ENCODE measurements at regions of chr18 and their contacts with region 1.

Region 1: DNA sequence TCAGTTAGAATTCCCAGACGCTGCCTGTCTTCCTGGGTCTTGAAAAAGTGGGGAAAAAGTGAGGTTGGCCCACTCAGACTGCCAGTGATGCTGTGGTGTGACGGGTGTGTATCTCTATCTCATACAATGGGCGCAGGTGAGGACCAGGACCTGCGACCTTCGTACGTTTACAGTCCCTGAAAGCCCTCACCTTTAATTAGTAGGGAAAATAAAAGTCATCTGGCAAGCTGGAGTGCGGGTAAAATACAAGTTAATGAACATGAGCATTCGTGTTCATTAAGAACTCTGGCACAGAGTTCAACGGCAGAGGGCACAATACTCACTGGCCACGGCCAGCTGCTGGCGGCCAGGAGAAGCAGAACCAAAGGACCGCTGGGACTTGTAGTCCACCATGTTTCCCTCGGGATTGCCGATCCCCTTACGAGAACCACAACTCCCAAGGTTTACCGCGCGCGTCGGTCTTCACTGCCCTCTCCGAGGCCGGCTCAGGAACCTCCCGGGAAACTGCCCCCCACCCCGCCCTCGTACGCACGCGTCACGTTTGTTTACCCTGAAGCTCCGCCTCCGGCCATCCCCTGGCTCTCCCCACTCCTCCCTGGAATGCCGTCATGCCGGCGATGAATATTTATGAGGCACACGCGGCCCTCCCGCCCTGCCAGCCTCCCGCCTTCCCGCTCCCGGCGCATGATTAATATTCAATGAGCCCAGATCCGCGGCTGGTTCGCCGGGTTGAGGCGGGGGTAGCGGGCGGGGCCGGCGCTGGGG is 488 bp upstream of the PHLPP1 start:
- DNase-seq: peak; percentile 100
- H3K4me3 ChIP-seq: peak overlapping the region; percentile 74 to 86 (median 79)
- H3K27ac ChIP-seq: peak overlapping the region; percentile 97 to 99 (median 98)
- H3K4me1 ChIP-seq: peaks cover 6 to 41% (median 20%) of the 10 kb centered on the region in 4 donors
- H3K27me3 ChIP-seq: no peaks in the 10 kb centered on the region
- CTCF ChIP-seq: peak; percentile 64 to 86 (median 73)
- EP300 ChIP-seq: peak; percentile 14
- POLR2A ChIP-seq: peak; percentile 75

Region 2: GRCh38 chr18:62186774-62187542 is 527.9 kb before region 1 on chr18 and contains the starts of genes PIGN and RELCH:
- in situ Hi-C with region 1: loop called in 1 of 4 experiments (anchors 25 kb)
- intact Hi-C with region 1: no loop called
- DNase-seq: peak; percentile 96
- H3K4me3 ChIP-seq: peak within 1 kb of the TSS; percentile 83 to 91 (median 86)
- H3K27ac ChIP-seq: peak within 1 kb of the TSS; percentile 86 to 94 (median 91)
- H3K4me1 ChIP-seq: peaks cover 8 to 49% (median 25%) of the 10 kb centered on the region in 4 donors
- H3K27me3 ChIP-seq: no peaks in the 10 kb centered on the region
- CTCF ChIP-seq: no peak
- EP300 ChIP-seq: no peak
- POLR2A ChIP-seq: peak; percentile 95
- total RNA-seq, gene PIGN: 15.3 to 105 (median 42.3) TPM
- total RNA-seq, gene RELCH: 37.0 to 117 (median 68.7) TPM

Region 3: GRCh38 chr18:62584241-62585120 is 130.4 kb before region 1 on chr18:
- in situ Hi-C with region 1: no loop called
- intact Hi-C with region 1: loop called (anchors 10 kb)
- DNase-seq: peak; percentile 88
- H3K4me3 ChIP-seq: no peak overlapping the region
- H3K27ac ChIP-seq: peak overlapping the region; percentile 3 to 45 (median 14)
- H3K4me1 ChIP-seq: peaks cover 4 to 22% (median 5%) of the 10 kb centered on the region in 4 donors
- H3K27me3 ChIP-seq: no peaks in the 10 kb centered on the region
- CTCF ChIP-seq: peak; percentile 97 to 100 (median 98)
- EP300 ChIP-seq: no peak
- POLR2A ChIP-seq: no peak

Region 4: GRCh38 chr18:62957885-62958472 is 243.1 kb after region 1 on chr18:
- in situ Hi-C with region 1: loop called in 3 of 4 experiments (anchors 10 to 25 kb)
- intact Hi-C with region 1: no loop called
- DNase-seq: peak; percentile 44
- H3K4me3 ChIP-seq: no peak overlapping the region
- H3K27ac ChIP-seq: no peak overlapping the region
- H3K4me1 ChIP-seq: no peaks in the 10 kb centered on the region
- H3K27me3 ChIP-seq: no peaks in the 10 kb centered on the region
- CTCF ChIP-seq: peak; percentile 35 to 68 (median 49)
- EP300 ChIP-seq: no peak
- POLR2A ChIP-seq: no peak

Region 5: DNA sequence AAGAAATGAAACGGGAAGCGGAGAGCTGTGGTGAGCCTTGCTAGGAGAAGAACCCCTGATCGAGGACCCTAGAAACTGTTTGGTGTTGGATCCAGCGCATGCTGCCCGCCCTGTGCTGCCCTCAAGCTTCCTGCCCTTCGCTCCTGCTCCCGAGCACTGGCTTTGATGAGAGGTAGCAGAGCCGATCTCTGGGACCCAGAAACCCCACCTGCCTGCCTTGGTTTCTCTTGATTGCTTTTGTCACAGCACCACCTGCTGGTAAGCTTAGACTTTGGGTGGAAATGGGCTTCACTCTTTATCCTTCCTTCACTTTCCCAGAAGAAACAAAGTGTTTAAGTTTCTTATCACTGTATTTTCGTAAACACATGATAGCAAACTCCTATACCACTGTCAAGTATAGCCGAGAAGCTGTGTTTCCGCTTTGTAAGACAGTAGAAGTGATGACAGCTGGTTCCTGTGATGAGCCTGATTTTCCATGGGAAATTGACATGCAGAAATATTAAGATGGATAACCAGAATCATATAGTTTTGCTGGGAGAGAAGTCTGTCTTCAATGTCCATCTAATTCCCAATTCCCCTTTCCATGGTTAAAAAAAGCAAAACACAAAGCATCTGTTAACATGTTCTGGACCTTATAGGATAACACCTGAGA is 267.9 kb after region 1 on chr18:
- in situ Hi-C with region 1: loop called in 1 of 4 experiments (anchors 25 kb)
- intact Hi-C with region 1: loop called (anchors 5 kb)
- DNase-seq: peak; percentile 44
- H3K4me3 ChIP-seq: peak overlapping the region in 2 of 4 donors; percentile 19 to 24
- H3K27ac ChIP-seq: no peak overlapping the region
- H3K4me1 ChIP-seq: peaks cover 0 to 4% (median 3%) of the 10 kb centered on the region in 4 donors
- H3K27me3 ChIP-seq: no peaks in the 10 kb centered on the region
- CTCF ChIP-seq: peak; percentile 71 to 79 (median 73)
- EP300 ChIP-seq: no peak
- POLR2A ChIP-seq: no peak

Region 6: GRCh38 chr18:63273222-63273927 is 558.5 kb after region 1 on chr18:
- in situ Hi-C with region 1: no loop called
- intact Hi-C with region 1: no loop called
- DNase-seq: no peak
- H3K4me3 ChIP-seq: no peak overlapping the region
- H3K27ac ChIP-seq: no peak overlapping the region
- H3K4me1 ChIP-seq: peaks cover 0 to 22% (median 1%) of the 10 kb centered on the region in 4 donors
- H3K27me3 ChIP-seq: no peaks in the 10 kb centered on the region
- CTCF ChIP-seq: no peak
- EP300 ChIP-seq: no peak
- POLR2A ChIP-seq: no peak

Region 7: DNA sequence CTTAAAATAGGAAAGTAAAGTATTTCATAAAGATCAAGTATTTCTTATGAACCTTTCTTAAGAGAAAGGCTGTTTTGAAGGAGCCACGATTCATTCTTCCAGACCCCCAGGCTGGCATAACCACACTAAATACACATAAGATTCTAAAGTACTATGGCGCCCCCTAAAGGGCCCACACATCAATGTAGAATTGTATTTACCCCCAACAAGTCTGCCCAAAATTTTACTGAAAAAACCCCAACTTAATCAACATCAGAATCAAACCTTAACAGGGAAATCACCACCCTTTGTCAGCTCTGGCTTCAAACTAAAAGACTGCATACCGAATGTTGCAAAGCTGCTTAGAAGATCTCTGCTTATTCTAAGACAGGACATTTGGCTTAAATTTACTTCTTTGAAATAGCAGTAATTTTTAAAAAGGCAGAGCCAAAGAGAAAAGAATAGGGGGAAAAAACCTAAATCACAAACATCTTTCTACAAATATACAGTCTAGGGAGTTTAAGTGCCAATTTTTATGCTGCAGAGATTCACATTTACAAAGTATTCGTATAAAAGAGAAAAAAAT is 625.1 kb after region 1 on chr18:
- in situ Hi-C with region 1: loop called in 1 of 4 experiments (anchors 25 kb)
- intact Hi-C with region 1: no loop called
- DNase-seq: no peak
- H3K4me3 ChIP-seq: no peak overlapping the region
- H3K27ac ChIP-seq: no peak overlapping the region
- H3K4me1 ChIP-seq: peaks cover 0 to 7% (median 6%) of the 10 kb centered on the region in 4 donors
- H3K27me3 ChIP-seq: no peaks in the 10 kb centered on the region
- CTCF ChIP-seq: peak in 4 of 5 experiments; percentile 13 to 45 (median 40)
- EP300 ChIP-seq: no peak
- POLR2A ChIP-seq: no peak

Region 8: DNA sequence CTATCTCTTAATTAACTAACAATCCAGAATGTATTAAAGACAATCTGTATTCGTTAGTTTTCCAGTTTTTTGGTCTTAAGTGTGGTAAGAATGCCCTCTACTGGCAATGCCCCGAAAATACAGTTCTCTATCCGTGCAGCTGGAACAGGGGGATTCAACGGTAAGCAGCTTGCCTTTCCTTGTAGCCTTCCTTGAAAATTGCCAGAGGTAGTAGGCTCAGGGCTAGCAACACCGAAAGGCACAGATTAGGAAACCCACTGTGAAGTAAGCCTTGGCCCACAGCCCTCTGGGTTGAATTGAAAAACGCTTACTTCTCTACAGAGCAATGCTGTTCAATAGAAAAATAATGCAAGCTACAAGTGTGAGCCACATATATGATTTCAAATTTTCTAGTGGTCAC is 724.5 kb after region 1 on chr18:
- in situ Hi-C with region 1: loop called in 1 of 4 experiments (anchors 25 kb)
- intact Hi-C with region 1: no loop called
- DNase-seq: peak; percentile 52
- H3K4me3 ChIP-seq: no peak overlapping the region
- H3K27ac ChIP-seq: no peak overlapping the region
- H3K4me1 ChIP-seq: peaks cover 0 to 9% (median 4%) of the 10 kb centered on the region in 4 donors
- H3K27me3 ChIP-seq: no peaks in the 10 kb centered on the region
- CTCF ChIP-seq: peak; percentile 74 to 83 (median 79)
- EP300 ChIP-seq: no peak
- POLR2A ChIP-seq: no peak